ENCODE measurements at regions of chr12 and their contacts with region 1.

Region 1: GRCh38 chr12:123365025-123365917 is 624 bp upstream of the SBNO1 start:
- DNase-seq: peak; percentile 91
- ATAC-seq: peak; percentile 69
- H3K4me3 Mint-ChIP-seq: peak overlapping the region; percentile 90
- H3K27ac Mint-ChIP-seq: peak overlapping the region; percentile 99
- H3K4me1 Mint-ChIP-seq: peaks cover 21% of the 10 kb centered on the region
- H3K27me3 Mint-ChIP-seq: no peaks in the 10 kb centered on the region
- CTCF ChIP-seq: no peak

Region 2: GRCh38 chr12:122974274-122974891 is 390.9 kb before region 1 on chr12:
- CTCF ChIA-PET with region 1: no interaction called
- POLR2A ChIA-PET with region 1: interaction called, 7 read pairs
- intact Hi-C with region 1: loop called (anchors 1 kb)
- DNase-seq: peak; percentile 96
- ATAC-seq: peak; percentile 87
- H3K4me3 Mint-ChIP-seq: peak overlapping the region; percentile 98
- H3K27ac Mint-ChIP-seq: peak overlapping the region; percentile 99
- H3K4me1 Mint-ChIP-seq: peaks cover 28% of the 10 kb centered on the region
- H3K27me3 Mint-ChIP-seq: no peaks in the 10 kb centered on the region
- CTCF ChIP-seq: no peak

Region 3: GRCh38 chr12:123382684-123383083 is 17.4 kb after region 1 on chr12:
- CTCF ChIA-PET with region 1: interaction called, 11 read pairs
- POLR2A ChIA-PET with region 1: interaction called, 88 read pairs
- intact Hi-C with region 1: loop called (anchors 1 kb)
- DNase-seq: no peak
- ATAC-seq: no peak
- H3K4me3 Mint-ChIP-seq: peak overlapping the region; percentile 60
- H3K27ac Mint-ChIP-seq: no peak overlapping the region
- H3K4me1 Mint-ChIP-seq: peaks cover 16% of the 10 kb centered on the region
- H3K27me3 Mint-ChIP-seq: no peaks in the 10 kb centered on the region
- CTCF ChIP-seq: no peak

Region 4: DNA sequence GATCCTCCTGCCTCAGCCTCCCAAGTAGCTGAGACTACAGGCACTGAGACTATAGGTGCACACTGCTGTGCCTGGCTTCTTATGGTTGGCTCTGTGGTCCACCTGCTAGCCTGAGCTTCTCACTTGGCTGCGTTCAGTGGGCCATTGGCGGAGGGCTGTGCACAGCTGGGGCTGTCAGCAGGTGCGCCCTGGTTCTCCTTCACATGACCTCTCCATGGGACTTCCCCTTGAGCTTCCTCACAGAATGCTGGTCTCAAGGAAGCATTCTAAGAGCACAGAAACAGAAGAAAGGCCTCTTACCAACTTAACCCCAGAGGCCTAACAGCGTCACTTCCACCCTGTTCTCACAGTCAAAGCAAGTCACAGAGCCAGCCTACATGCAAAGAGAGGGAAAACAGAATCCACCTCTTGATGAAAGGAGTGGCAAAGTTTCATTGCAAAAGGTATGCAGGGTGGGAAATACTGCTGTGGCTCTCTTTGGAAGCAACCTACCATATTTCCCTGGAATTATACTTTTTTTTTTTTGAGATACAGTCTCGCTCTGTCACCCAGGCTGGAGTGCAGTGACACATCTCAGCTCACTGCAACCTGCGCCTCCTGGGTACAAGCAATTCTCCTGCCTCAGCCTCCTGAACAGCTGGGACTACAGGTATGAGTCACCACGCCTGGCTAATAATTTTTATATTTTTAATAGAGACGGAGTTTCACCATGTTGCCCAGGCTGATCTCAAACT is 61.9 kb after region 1 on chr12:
- CTCF ChIA-PET with region 1: no interaction called
- POLR2A ChIA-PET with region 1: interaction called, 52 read pairs
- intact Hi-C with region 1: loop called (anchors 1 kb)
- DNase-seq: peak; percentile 67
- ATAC-seq: peak; percentile 88
- H3K4me3 Mint-ChIP-seq: peak overlapping the region; percentile 75
- H3K27ac Mint-ChIP-seq: peak overlapping the region; percentile 93
- H3K4me1 Mint-ChIP-seq: peaks cover 39% of the 10 kb centered on the region
- H3K27me3 Mint-ChIP-seq: no peaks in the 10 kb centered on the region
- CTCF ChIP-seq: no peak

Region 5: GRCh38 chr12:123457980-123458783 is 92.9 kb after region 1 on chr12 and contains the start of gene SNRNP35:
- CTCF ChIA-PET with region 1: no interaction called
- POLR2A ChIA-PET with region 1: interaction called, 47 read pairs
- intact Hi-C with region 1: loop called (anchors 1 kb)
- DNase-seq: peak; percentile 84
- ATAC-seq: peak; percentile 79
- H3K4me3 Mint-ChIP-seq: peak within 1 kb of the TSS; percentile 100
- H3K27ac Mint-ChIP-seq: peak within 1 kb of the TSS; percentile 100
- H3K4me1 Mint-ChIP-seq: peaks cover 33% of the 10 kb centered on the region
- H3K27me3 Mint-ChIP-seq: no peaks in the 10 kb centered on the region
- CTCF ChIP-seq: no peak
- total RNA-seq, gene SNRNP35: 39.5 and 51.5 TPM in 2 replicates

Region 6: DNA sequence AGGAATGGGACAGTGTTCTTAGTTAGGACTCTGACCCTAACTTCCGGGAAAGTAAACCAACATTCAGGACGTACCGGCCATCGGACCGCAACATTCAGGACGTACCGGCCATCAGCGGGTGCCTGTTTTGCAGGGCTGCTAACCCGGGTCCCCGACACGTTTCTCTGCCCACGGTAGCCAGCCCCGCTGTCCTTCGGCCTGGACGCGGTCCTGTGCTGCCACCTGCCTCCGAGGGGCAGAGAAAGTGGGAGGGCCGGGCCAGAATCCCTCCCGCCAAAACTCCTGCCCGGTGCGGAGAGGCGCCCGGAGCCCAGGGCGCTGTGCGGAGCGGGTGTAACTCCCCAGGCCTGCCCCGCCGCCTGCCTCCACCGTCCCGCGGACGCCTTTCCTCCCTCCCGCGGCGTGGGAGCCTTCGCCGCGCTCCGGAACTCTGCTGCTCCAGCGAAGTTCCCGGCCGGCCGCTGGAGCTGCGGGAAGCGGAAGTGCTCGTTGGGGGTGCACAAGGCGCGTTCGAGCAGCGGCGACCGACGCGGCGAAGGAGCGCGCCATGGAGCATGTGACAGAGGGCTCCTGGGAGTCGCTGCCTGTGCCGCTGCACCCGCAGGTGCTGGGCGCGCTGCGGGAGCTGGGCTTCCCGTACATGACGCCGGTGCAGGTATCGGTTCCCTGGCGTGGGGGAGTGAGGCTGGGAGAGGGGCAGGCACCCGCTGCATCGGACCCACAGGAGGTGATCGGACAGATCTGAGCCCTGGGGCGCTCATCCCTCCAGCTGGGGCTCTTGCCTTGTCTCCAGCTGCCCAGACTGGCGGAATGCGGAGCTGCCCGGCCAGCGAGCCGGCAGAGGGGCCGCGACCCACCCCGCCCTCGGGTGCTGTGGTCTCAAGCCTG is 236.6 kb after region 1 on chr12 and contains the start of gene DDX55:
- CTCF ChIA-PET with region 1: interaction called, 3 read pairs
- POLR2A ChIA-PET with region 1: interaction called, 21 read pairs
- intact Hi-C with region 1: loop called (anchors 1 kb)
- DNase-seq: peak; percentile 86
- ATAC-seq: peak; percentile 89
- H3K4me3 Mint-ChIP-seq: peak within 1 kb of the TSS; percentile 97
- H3K27ac Mint-ChIP-seq: peak within 1 kb of the TSS; percentile 92
- H3K4me1 Mint-ChIP-seq: peaks cover 24% of the 10 kb centered on the region
- H3K27me3 Mint-ChIP-seq: no peaks in the 10 kb centered on the region
- CTCF ChIP-seq: no peak
- total RNA-seq, gene DDX55: 28.8 and 35.0 TPM in 2 replicates

Region 7: DNA sequence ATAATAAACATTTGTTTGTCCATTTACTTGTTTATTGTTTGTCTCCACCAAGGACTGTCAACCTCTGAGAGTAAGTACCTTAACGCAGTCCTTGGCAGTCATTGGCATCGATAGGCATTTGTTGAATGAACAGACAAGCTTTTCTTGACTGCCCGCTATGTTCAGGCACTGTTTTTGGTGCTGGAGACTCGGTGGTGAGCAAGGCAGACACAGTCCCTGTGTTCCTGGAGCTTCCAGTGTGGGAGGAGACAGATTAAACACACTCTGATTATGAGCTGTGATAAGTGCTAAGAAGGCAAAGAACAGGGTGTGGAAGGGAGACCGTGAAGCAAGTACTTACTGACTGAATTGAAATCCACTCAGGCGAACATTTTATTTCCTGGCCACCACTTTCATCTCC is 348.1 kb after region 1 on chr12:
- CTCF ChIA-PET with region 1: no interaction called
- POLR2A ChIA-PET with region 1: no interaction called
- intact Hi-C with region 1: loop called (anchors 1 kb)
- DNase-seq: no peak
- ATAC-seq: no peak
- H3K4me3 Mint-ChIP-seq: peak overlapping the region; percentile 92
- H3K27ac Mint-ChIP-seq: peak overlapping the region; percentile 80
- H3K4me1 Mint-ChIP-seq: peaks cover 37% of the 10 kb centered on the region
- H3K27me3 Mint-ChIP-seq: no peaks in the 10 kb centered on the region
- CTCF ChIP-seq: no peak

Region 8: DNA sequence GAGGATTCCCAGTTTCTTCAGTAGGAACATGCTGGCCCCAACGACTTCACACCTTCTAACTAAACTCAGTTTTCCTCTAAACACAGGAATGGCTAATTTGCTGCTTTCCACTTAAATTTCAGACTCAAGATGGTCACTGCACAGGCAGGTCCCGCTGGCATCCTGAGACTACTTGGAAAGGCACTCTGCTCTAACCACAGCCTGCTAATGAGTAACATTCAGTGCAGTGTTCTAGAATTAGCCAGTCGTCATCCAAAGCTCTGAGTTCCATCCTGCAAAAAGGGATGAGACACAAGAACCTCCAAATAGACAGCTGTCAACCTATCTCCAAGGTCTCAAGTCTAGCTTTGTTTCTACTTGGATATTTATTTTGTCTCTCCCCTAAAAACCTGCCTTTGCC is 601.3 kb after region 1 on chr12:
- CTCF ChIA-PET with region 1: no interaction called
- POLR2A ChIA-PET with region 1: no interaction called
- intact Hi-C with region 1: no loop called
- DNase-seq: no peak
- ATAC-seq: no peak
- H3K4me3 Mint-ChIP-seq: no peak overlapping the region
- H3K27ac Mint-ChIP-seq: no peak overlapping the region
- H3K4me1 Mint-ChIP-seq: peaks cover 5% of the 10 kb centered on the region
- H3K27me3 Mint-ChIP-seq: no peaks in the 10 kb centered on the region
- CTCF ChIP-seq: no peak

Measured in activated B cell treated with CpG ODN at 0.5 μM for 24 hours (primary cell).